ENCODE measurements at regions of chrX and their contacts with region 1.

Region 1: DNA sequence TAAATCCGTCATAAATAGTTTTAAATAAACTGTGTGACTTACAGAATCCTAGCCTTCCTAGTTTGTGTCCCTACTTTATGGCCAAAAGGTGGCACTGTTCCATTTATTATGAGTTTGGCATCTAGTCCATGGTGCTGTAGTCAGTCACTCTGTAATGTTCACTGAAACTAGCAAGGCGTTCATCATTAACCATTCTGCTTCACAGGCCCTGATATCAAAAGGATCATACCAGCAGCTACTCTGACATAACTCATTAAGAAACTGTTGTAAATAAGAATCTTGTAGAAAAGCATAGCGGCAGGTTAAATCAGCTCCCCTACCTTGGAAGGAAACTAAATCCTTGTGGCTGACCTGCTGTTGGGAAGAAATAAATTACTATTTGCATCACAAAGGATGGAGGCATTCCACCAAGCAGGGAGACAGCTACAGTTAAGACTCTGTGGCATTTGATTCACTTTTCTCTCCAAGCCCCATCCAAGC is 919.6 kb upstream of the DIAPH2 start:
- DNase-seq: no peak
- ATAC-seq: no peak
- H3K4me3 ChIP-seq: no peak overlapping the region
- H3K27ac ChIP-seq: no peak overlapping the region
- H3K4me1 ChIP-seq: no peaks in the 10 kb centered on the region
- H3K27me3 ChIP-seq: no peaks in the 10 kb centered on the region

Region 2: GRCh38 chrX:95427389-95427788 is 337.6 kb before region 1 on chrX:
- intact Hi-C with region 1: no loop called
- DNase-seq: peak; percentile 51 to 62
- ATAC-seq: peak; percentile 56
- H3K4me3 ChIP-seq: no peak overlapping the region
- H3K27ac ChIP-seq: no peak overlapping the region
- H3K4me1 ChIP-seq: no peaks in the 10 kb centered on the region
- H3K27me3 ChIP-seq: no peaks in the 10 kb centered on the region

Region 3: GRCh38 chrX:96182366-96182765 is 417.4 kb after region 1 on chrX:
- intact Hi-C with region 1: loop called in 1 of 2 experiments (anchors 10 kb)
- DNase-seq: no peak
- ATAC-seq: no peak
- H3K4me3 ChIP-seq: no peak overlapping the region
- H3K27ac ChIP-seq: no peak overlapping the region
- H3K4me1 ChIP-seq: no peaks in the 10 kb centered on the region
- H3K27me3 ChIP-seq: no peaks in the 10 kb centered on the region

Measured in aorta (tissue), 5 donors.